ENCODE measurements at regions of chr6 and their contacts with region 1.

Region 1: DNA sequence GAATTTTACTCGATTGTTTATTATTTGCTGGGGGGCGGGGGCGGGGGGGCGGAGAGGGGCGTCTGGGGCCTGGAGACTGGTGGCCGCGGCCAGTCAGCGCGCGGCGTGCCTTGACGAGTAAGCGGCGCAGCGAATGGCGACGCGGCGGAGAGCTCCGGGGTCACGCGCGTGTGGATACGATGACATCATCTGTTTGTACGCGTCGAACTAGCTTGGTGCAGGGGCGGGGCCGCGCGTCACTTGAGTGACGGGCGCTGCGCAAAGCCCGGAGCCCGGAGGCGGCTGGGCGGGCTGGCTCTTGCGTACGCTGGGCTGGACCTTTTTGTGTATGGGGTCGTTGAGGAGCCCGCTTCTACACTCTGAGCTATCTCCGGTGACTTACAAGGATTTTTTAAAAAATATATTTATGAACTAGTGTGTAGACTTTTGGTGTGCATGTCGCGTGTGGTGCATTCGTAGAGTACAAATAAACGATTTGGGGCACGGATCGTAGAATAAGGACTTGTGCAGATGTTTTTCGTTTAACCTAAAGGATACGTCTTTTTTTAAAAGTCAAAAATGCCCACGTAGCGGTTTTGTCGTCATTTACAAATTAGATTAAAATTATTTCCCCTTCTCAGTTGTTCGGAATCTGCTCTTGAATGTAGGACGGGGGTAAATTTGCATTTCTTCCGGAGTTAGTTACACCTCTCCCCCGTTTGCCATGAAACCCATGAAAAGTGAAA is 2.2 kb upstream of the FOXO3 start:
- DNase-seq: peak; percentile 95
- H3K4me3 Mint-ChIP-seq: peak overlapping the region; percentile 87
- H3K27ac Mint-ChIP-seq: peak overlapping the region; percentile 93
- H3K4me1 Mint-ChIP-seq: peaks cover 16% of the 10 kb centered on the region
- H3K27me3 Mint-ChIP-seq: peaks cover 46% of the 10 kb centered on the region

Region 2: GRCh38 chr6:108492131-108492766 is 66.3 kb before region 1 on chr6:
- intact Hi-C with region 1: no loop called
- DNase-seq: no peak
- H3K4me3 Mint-ChIP-seq: no peak overlapping the region
- H3K27ac Mint-ChIP-seq: no peak overlapping the region
- H3K4me1 Mint-ChIP-seq: no peaks in the 10 kb centered on the region
- H3K27me3 Mint-ChIP-seq: peaks cover 19% of the 10 kb centered on the region

Region 3: GRCh38 chr6:108598305-108598863 is 39.9 kb after region 1 on chr6:
- intact Hi-C with region 1: no loop called
- DNase-seq: no peak
- H3K4me3 Mint-ChIP-seq: no peak overlapping the region
- H3K27ac Mint-ChIP-seq: no peak overlapping the region
- H3K4me1 Mint-ChIP-seq: peaks cover 7% of the 10 kb centered on the region
- H3K27me3 Mint-ChIP-seq: peaks cover 17% of the 10 kb centered on the region

Region 4: DNA sequence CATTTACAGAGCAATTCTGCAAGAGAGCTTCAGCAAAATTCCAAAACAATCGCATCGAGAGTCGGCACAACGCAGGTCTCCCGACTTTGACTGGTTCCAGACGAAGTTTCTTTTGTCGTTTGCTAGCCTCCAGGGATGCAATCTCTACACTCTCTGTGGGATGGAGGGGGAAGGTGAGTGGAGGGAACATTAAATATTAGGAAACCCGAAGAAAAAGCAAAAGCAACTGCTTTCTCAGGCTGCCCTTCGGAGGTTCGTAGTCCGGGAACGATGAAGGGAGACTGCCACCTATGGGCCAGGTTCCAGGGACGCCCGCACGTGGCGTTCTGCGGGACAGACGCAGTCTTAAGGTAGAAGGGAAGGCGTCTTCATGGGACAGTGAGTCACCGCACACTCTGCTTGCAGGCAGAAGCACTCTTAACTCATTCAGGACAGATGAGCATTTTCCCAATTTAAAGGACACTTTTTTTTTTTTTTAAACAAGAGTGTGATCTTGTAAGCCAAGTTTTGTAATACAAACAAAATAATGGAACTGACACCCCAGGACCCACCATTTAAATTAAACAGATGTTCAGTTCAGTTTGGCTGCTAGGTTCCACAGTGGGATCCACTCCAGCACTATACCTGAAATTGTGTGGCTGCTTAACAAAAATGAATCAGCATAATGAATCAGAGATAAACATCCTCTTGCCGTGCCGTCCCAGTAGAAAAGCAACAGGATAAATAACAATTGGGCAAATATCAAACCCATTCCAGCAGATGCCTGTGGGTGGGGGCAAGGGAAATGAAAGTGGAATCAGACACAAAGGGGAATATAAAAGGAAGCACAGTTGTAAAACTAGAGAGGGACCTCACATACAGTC is 223.9 kb after region 1 on chr6:
- intact Hi-C with region 1: loop called (anchors 5 kb)
- DNase-seq: peak; percentile 65
- H3K4me3 Mint-ChIP-seq: peak overlapping the region; percentile 55
- H3K27ac Mint-ChIP-seq: no peak overlapping the region
- H3K4me1 Mint-ChIP-seq: peaks cover 11% of the 10 kb centered on the region
- H3K27me3 Mint-ChIP-seq: peaks cover 66% of the 10 kb centered on the region

Region 5: GRCh38 chr6:108883172-108883571 is 324.6 kb after region 1 on chr6:
- intact Hi-C with region 1: loop called (anchors 2 kb)
- DNase-seq: no peak
- H3K4me3 Mint-ChIP-seq: no peak overlapping the region
- H3K27ac Mint-ChIP-seq: peak overlapping the region; percentile 84
- H3K4me1 Mint-ChIP-seq: peaks cover 37% of the 10 kb centered on the region
- H3K27me3 Mint-ChIP-seq: peaks cover 19% of the 10 kb centered on the region

Region 6: GRCh38 chr6:109095027-109095834 is 536.7 kb after region 1 on chr6 and contains the start of gene CEP57L1:
- intact Hi-C with region 1: loop called (anchors 1 kb)
- DNase-seq: peak; percentile 92
- H3K4me3 Mint-ChIP-seq: peak within 1 kb of the TSS; percentile 93
- H3K27ac Mint-ChIP-seq: peak within 1 kb of the TSS; percentile 99
- H3K4me1 Mint-ChIP-seq: peaks cover 45% of the 10 kb centered on the region
- H3K27me3 Mint-ChIP-seq: no peaks in the 10 kb centered on the region
- total RNA-seq, gene CEP57L1: 18.2 and 25.4 TPM in 2 replicates